ENCODE measurements at regions of chr19 and their contacts with region 1.

Region 1: GRCh38 chr19:41872775-41873647 is 4.1 kb upstream of the CD79A start:
- DNase-seq: peak; percentile 92
- H3K4me3 Mint-ChIP-seq: no peak overlapping the region
- H3K27ac Mint-ChIP-seq: peak overlapping the region; percentile 78
- H3K4me1 Mint-ChIP-seq: peaks cover 22% of the 10 kb centered on the region
- H3K27me3 Mint-ChIP-seq: no peaks in the 10 kb centered on the region
- CTCF ChIP-seq: peak; percentile 85

Region 2: GRCh38 chr19:41859618-41860418 is 13.2 kb before region 1 on chr19 and contains the start of gene RPS19:
- CTCF ChIA-PET with region 1: interaction called, 11 read pairs
- intact Hi-C with region 1: no loop called
- DNase-seq: peak; percentile 98
- H3K4me3 Mint-ChIP-seq: peak within 1 kb of the TSS; percentile 80
- H3K27ac Mint-ChIP-seq: peak within 1 kb of the TSS; percentile 86
- H3K4me1 Mint-ChIP-seq: peaks cover 34% of the 10 kb centered on the region
- H3K27me3 Mint-ChIP-seq: peaks cover 8% of the 10 kb centered on the region
- CTCF ChIP-seq: peak; percentile 87
- total RNA-seq, gene RPS19: 2,051 and 2,220 TPM in 2 replicates

Region 3: GRCh38 chr19:41883821-41884733 is 11.1 kb after region 1 on chr19:
- CTCF ChIA-PET with region 1: interaction called, 12 read pairs
- intact Hi-C with region 1: no loop called
- DNase-seq: peak; percentile 98
- H3K4me3 Mint-ChIP-seq: peak overlapping the region; percentile 73
- H3K27ac Mint-ChIP-seq: peak overlapping the region; percentile 73
- H3K4me1 Mint-ChIP-seq: peaks cover 53% of the 10 kb centered on the region
- H3K27me3 Mint-ChIP-seq: peaks cover 16% of the 10 kb centered on the region
- CTCF ChIP-seq: no peak

Region 4: DNA sequence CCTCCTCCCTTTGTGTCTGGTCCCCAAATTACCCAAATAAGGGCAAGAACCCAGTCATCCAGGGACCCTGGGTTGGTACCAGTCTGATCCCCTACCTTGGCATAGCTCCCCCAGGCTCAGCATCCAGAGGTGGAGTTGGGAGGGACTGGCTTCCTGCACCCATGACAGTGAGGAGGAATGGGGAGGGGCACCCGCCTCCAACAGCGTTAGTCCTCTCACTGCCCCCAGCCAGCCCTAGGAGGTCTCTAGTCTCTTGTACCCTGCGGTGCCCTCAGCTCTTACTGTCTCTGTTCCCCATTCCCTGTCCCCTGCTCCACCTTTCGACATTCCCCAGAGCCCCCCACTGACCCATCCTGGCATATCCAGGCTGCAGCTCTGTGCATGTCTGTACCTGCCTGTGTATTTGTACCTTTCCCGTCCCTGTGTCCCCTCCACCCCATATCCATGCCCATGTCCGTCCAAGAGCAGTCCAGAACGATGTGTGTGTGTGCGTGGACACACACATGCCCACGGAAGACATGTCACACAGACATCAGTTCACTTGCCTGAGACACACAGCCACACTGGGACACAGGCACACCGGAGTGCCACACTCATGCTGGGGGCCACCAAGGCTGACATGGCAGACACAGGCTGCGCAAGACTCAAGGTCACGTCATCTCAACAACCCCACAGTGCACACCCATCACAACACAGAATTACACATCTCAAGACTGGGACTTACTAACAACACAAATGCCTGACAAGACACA is 37.4 kb after region 1 on chr19:
- CTCF ChIA-PET with region 1: no interaction called
- intact Hi-C with region 1: no loop called
- DNase-seq: no peak
- H3K4me3 Mint-ChIP-seq: no peak overlapping the region
- H3K27ac Mint-ChIP-seq: peak overlapping the region; percentile 62
- H3K4me1 Mint-ChIP-seq: peaks cover 18% of the 10 kb centered on the region
- H3K27me3 Mint-ChIP-seq: no peaks in the 10 kb centered on the region
- CTCF ChIP-seq: no peak

Region 5: GRCh38 chr19:41921577-41922576 is 48.9 kb after region 1 on chr19:
- CTCF ChIA-PET with region 1: interaction called, 10 read pairs
- intact Hi-C with region 1: no loop called
- DNase-seq: no peak
- H3K4me3 Mint-ChIP-seq: no peak overlapping the region
- H3K27ac Mint-ChIP-seq: no peak overlapping the region
- H3K4me1 Mint-ChIP-seq: peaks cover 9% of the 10 kb centered on the region
- H3K27me3 Mint-ChIP-seq: no peaks in the 10 kb centered on the region
- CTCF ChIP-seq: no peak

Region 6: GRCh38 chr19:41934849-41935374 is 61.9 kb after region 1 on chr19:
- CTCF ChIA-PET with region 1: interaction called, 9 read pairs
- intact Hi-C with region 1: loop called (anchors 2 kb)
- DNase-seq: peak; percentile 88
- H3K4me3 Mint-ChIP-seq: no peak overlapping the region
- H3K27ac Mint-ChIP-seq: no peak overlapping the region
- H3K4me1 Mint-ChIP-seq: peaks cover 20% of the 10 kb centered on the region
- H3K27me3 Mint-ChIP-seq: peaks cover under 1% of the 10 kb centered on the region
- CTCF ChIP-seq: peak; percentile 86

Region 7: DNA sequence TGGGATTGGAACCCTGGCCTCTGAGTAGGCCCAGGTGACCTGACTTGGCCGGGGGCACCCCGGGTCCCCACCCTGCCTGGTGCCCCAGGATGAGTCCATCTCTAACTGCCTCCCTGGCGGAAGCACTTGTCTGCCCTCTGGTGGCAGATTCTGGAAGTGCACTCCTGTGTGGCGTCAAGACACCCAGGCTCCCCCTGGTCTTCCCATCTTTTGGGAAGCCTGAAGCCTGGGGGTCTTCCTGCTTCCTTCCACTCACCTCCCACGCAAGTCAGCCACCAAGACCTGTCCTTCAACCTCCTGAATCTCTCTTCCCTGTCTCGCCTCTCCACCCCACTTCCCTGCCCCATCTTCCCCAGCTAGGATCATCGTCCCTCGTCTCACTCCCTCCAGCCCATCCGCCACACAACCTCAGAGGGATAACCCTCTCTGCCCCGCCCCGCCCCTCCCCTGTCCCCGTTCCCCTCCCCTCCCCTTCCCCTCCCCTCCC is 78.7 kb after region 1 on chr19:
- CTCF ChIA-PET with region 1: interaction called, 16 read pairs
- intact Hi-C with region 1: loop called (anchors 1 kb)
- DNase-seq: peak; percentile 89
- H3K4me3 Mint-ChIP-seq: peak overlapping the region; percentile 6
- H3K27ac Mint-ChIP-seq: no peak overlapping the region
- H3K4me1 Mint-ChIP-seq: peaks cover 7% of the 10 kb centered on the region
- H3K27me3 Mint-ChIP-seq: no peaks in the 10 kb centered on the region
- CTCF ChIP-seq: peak; percentile 100

Region 8: GRCh38 chr19:41959056-41960053 is 86.3 kb after region 1 on chr19 and contains the start of gene RABAC1:
- CTCF ChIA-PET with region 1: interaction called, 16 read pairs
- intact Hi-C with region 1: loop called (anchors 1 kb)
- DNase-seq: peak; percentile 93
- H3K4me3 Mint-ChIP-seq: peak within 1 kb of the TSS; percentile 80
- H3K27ac Mint-ChIP-seq: peak within 1 kb of the TSS; percentile 68
- H3K4me1 Mint-ChIP-seq: peaks cover 23% of the 10 kb centered on the region
- H3K27me3 Mint-ChIP-seq: no peaks in the 10 kb centered on the region
- CTCF ChIP-seq: no peak
- total RNA-seq, gene RABAC1: 116 and 126 TPM in 2 replicates